Spleen (tissue), 13 donors: ENCODE measurements at regions of chr5 and their contacts with region 1.

Region 1: DNA sequence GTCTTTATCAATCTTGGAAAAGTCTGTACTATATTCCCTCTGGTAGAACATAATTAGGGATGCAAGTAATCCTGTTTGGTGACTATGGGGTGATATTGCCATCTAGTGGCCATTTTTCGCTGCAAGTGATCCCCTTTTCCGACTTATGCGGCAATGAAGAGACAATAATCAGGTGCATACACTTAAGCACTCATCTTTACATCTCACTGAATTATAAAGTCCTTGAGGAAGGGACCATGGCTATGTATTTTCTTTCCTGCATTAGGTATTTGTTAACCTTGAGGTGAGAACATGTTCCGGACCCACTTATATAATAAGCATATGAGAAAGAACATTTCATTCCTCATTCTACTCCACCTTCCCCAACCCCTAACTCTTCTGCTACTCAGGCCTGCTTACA is 19.6 kb upstream of the LIX1 start:
- DNase-seq: no peak
- H3K4me3 ChIP-seq: no peak overlapping the region
- H3K27ac ChIP-seq: peak overlapping the region in 2 of 8 donors; percentile 24 to 40
- H3K4me1 ChIP-seq: peaks cover 0 to 22% (median 4%) of the 10 kb centered on the region in 6 donors
- H3K27me3 ChIP-seq: no peaks in the 10 kb centered on the region
- CTCF ChIP-seq: peak; percentile 63 to 90 (median 86)
- POLR2A ChIP-seq: no peak

Region 2: GRCh38 chr5:96226941-96227552 is 935.0 kb before region 1 on chr5:
- intact Hi-C with region 1: no loop called
- DNase-seq: no peak
- H3K4me3 ChIP-seq: no peak overlapping the region
- H3K27ac ChIP-seq: peak overlapping the region in 5 of 8 donors; percentile 29 to 55 (median 42)
- H3K4me1 ChIP-seq: no peaks in the 10 kb centered on the region
- H3K27me3 ChIP-seq: no peaks in the 10 kb centered on the region
- CTCF ChIP-seq: no peak
- POLR2A ChIP-seq: no peak

Region 3: GRCh38 chr5:96614110-96614691 is 547.8 kb before region 1 on chr5:
- intact Hi-C with region 1: loop called (anchors 10 kb)
- DNase-seq: no peak
- H3K4me3 ChIP-seq: no peak overlapping the region
- H3K27ac ChIP-seq: peak overlapping the region in 6 of 8 donors; percentile 15 to 65 (median 44)
- H3K4me1 ChIP-seq: peaks cover 0 to 19% (median 14%) of the 10 kb centered on the region in 6 donors
- H3K27me3 ChIP-seq: no peaks in the 10 kb centered on the region
- CTCF ChIP-seq: peak in 10 of 11 experiments; percentile 30 to 69 (median 43)
- POLR2A ChIP-seq: no peak

Region 4: DNA sequence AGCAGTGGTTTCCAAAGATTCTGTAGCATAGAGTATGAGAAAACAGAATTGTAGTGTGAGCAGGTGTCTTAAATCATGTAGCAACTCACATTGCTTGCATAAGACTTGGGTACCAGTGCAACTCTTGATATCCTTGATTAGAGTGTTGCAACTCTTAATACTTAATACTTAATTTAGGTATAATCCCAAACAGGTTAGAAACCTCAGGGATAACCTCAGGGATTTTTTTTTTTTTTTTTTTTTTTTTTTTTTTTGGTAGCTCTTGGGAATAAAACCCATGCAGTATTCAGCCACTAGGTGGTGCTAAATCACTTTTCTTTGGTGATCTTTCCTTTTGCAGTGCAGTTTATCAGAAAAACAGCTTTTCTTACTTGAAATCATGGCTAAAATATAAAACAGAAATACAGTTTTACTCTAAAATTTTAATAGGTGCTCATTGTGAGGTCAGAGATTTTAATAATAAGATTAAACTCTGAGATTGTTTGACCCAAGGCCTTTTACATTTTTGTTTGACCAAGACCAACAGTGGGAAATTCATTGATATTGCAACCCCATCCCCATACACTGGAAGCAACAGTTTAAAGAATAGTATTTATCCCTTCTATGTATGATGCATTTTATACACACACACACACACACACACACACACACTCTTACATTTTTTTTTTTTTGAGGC is 409.6 kb before region 1 on chr5:
- intact Hi-C with region 1: loop called (anchors 2 kb)
- DNase-seq: no peak
- H3K4me3 ChIP-seq: no peak overlapping the region
- H3K27ac ChIP-seq: peak overlapping the region in 3 of 8 donors; percentile 25 to 46 (median 26)
- H3K4me1 ChIP-seq: peaks cover 0 to 7% (median 0%) of the 10 kb centered on the region in 6 donors
- H3K27me3 ChIP-seq: no peaks in the 10 kb centered on the region
- CTCF ChIP-seq: peak; percentile 24 to 86 (median 72)
- POLR2A ChIP-seq: no peak

Region 5: GRCh38 chr5:96868603-96869371 is 293.3 kb before region 1 on chr5:
- intact Hi-C with region 1: loop called (anchors 5 kb)
- DNase-seq: no peak
- H3K4me3 ChIP-seq: no peak overlapping the region
- H3K27ac ChIP-seq: no peak overlapping the region
- H3K4me1 ChIP-seq: peaks cover 0 to 46% (median 22%) of the 10 kb centered on the region in 6 donors
- H3K27me3 ChIP-seq: no peaks in the 10 kb centered on the region
- CTCF ChIP-seq: peak; percentile 66 to 88 (median 83)
- POLR2A ChIP-seq: no peak

Region 6: GRCh38 chr5:96961053-96961452 is 201.0 kb before region 1 on chr5:
- intact Hi-C with region 1: no loop called
- DNase-seq: no peak
- H3K4me3 ChIP-seq: peak overlapping the region in 1 of 8 donors; percentile 12
- H3K27ac ChIP-seq: peak overlapping the region in 7 of 8 donors; percentile 14 to 80 (median 70)
- H3K4me1 ChIP-seq: peaks cover 50 to 100% (median 84%) of the 10 kb centered on the region in 6 donors
- H3K27me3 ChIP-seq: no peaks in the 10 kb centered on the region
- CTCF ChIP-seq: no peak
- POLR2A ChIP-seq: no peak

Region 7: GRCh38 chr5:97418462-97418861 is 256.4 kb after region 1 on chr5:
- intact Hi-C with region 1: no loop called
- DNase-seq: no peak
- H3K4me3 ChIP-seq: no peak overlapping the region
- H3K27ac ChIP-seq: no peak overlapping the region
- H3K4me1 ChIP-seq: no peaks in the 10 kb centered on the region
- H3K27me3 ChIP-seq: no peaks in the 10 kb centered on the region
- CTCF ChIP-seq: no peak
- POLR2A ChIP-seq: no peak